Right ventricle myocardium inferior (tissue), 1 donor: ENCODE measurements at regions of chr1 and their contacts with region 1.

Region 1: GRCh38 chr1:11790880-11791715 is 14.7 kb downstream of the MTHFR start:
- DNase-seq: peak; percentile 92
- ATAC-seq: peak; percentile 82

Region 2: GRCh38 chr1:11617310-11617709 is 173.8 kb before region 1 on chr1:
- intact Hi-C with region 1: no loop called
- DNase-seq: no peak
- ATAC-seq: no peak

Region 3: GRCh38 chr1:11681071-11681771 is 109.9 kb before region 1 on chr1 and contains the start of gene MAD2L2:
- intact Hi-C with region 1: no loop called
- DNase-seq: peak; percentile 96
- ATAC-seq: peak; percentile 98
- total RNA-seq, gene MAD2L2: 20.1 TPM

Region 4: GRCh38 chr1:11805447-11806306 is 14.6 kb after region 1 on chr1 and contains the starts of genes CLCN6 and MTHFR:
- intact Hi-C with region 1: loop called (anchors 2 kb)
- DNase-seq: peak; percentile 99
- ATAC-seq: peak; percentile 88
- total RNA-seq, gene CLCN6: 15.7 TPM
- total RNA-seq, gene MTHFR: 34.1 TPM

Region 5: GRCh38 chr1:11882814-11883538 is 91.9 kb after region 1 on chr1:
- intact Hi-C with region 1: loop called (anchors 5 kb)
- DNase-seq: peak; percentile 91
- ATAC-seq: peak; percentile 82

Region 6: GRCh38 chr1:12275369-12275768 is 484.3 kb after region 1 on chr1:
- intact Hi-C with region 1: no loop called
- DNase-seq: no peak
- ATAC-seq: no peak